ENCODE measurements at regions of chr5 and their contacts with region 1.

Region 1: DNA sequence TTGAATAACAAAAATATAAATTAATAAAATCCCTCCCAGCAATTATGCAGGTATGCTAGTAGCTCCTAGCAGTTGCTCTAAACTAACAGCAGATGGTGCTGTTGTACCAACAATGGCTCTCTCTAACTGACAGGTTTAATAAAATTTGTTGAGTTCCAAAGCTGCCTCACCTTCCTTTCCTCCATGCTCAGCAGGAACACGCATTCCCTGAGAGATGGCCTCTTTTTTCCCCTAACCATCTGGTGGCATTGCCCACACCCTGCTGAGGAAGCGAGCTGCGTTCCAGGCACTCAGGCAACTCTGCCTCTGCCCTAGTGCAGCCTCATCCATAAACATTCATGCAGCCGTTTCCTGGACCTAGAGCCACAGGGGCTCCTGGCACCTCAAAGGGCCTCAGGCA is 106.2 kb downstream of the KLHL3 start:
- DNase-seq: no peak
- H3K4me3 Mint-ChIP-seq: no peak overlapping the region
- H3K27ac Mint-ChIP-seq: no peak overlapping the region
- H3K4me1 Mint-ChIP-seq: no peaks in the 10 kb centered on the region
- H3K27me3 Mint-ChIP-seq: no peaks in the 10 kb centered on the region

Region 2: GRCh38 chr5:137619191-137619870 is 10.3 kb before region 1 on chr5:
- CTCF ChIA-PET with region 1: interaction called, 18 read pairs
- POLR2A ChIA-PET with region 1: no interaction called
- intact Hi-C with region 1: no loop called
- DNase-seq: no peak
- H3K4me3 Mint-ChIP-seq: no peak overlapping the region
- H3K27ac Mint-ChIP-seq: no peak overlapping the region
- H3K4me1 Mint-ChIP-seq: no peaks in the 10 kb centered on the region
- H3K27me3 Mint-ChIP-seq: no peaks in the 10 kb centered on the region

Region 3: DNA sequence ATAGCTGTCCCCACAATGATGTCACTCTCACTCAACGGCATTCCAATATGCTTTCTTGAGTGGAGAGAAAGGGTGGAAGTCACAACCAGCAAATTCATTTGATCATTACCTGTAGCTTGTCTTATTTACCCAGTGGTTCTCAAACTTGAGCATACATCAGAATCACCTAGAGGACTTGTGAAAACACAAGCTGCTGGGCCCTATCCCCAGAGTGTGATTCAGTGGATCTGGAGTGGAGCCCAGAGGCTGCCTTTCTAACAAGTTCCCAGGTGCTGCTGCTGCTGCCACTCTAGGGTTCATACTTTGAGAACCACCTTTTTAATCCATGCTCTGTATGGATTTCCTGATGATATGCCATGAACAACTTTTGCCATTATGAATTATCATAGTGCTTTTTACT is 11.5 kb after region 1 on chr5:
- CTCF ChIA-PET with region 1: interaction called, 21 read pairs
- POLR2A ChIA-PET with region 1: no interaction called
- intact Hi-C with region 1: no loop called
- DNase-seq: no peak
- H3K4me3 Mint-ChIP-seq: no peak overlapping the region
- H3K27ac Mint-ChIP-seq: no peak overlapping the region
- H3K4me1 Mint-ChIP-seq: no peaks in the 10 kb centered on the region
- H3K27me3 Mint-ChIP-seq: no peaks in the 10 kb centered on the region

Region 4: DNA sequence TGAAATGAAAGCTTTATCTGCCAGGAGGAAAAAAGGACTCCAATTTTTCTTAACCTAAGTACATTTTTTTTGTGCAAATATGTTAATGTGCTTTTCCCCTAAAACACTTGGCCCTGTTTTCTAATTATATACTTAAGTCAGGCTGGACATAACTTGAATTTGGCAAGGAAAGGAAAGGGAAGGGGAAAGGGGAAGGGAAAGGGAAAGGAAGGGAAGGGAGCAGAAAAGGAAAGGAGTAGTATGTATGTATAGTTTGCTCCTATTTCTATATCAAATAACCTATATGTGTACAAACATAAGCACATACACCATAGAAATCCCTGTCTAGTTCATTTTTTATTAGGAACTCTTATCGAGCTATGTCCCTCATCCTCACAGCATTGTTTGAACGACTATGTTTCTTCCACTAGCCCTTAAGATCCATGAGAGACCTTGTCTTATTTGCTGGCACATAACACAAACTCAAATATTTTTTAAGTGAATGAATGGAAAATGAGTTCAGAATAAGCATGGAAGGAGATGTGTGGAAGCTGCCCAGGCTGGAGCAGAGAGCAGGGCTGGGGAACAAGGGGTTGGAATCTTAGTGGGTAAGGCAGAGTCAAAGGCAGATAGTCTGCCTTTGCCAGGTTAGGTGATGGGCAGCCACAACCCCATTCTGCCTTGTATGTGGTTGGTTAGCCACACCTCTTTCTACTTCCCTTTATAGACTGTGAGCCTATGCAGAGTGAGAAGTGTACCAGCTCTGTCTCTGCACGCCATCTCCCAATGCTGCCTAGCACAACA is 36.2 kb after region 1 on chr5:
- CTCF ChIA-PET with region 1: interaction called, 36 read pairs
- POLR2A ChIA-PET with region 1: no interaction called
- intact Hi-C with region 1: no loop called
- DNase-seq: peak; percentile 66
- H3K4me3 Mint-ChIP-seq: no peak overlapping the region
- H3K27ac Mint-ChIP-seq: peak overlapping the region; percentile 77
- H3K4me1 Mint-ChIP-seq: peaks cover 17% of the 10 kb centered on the region
- H3K27me3 Mint-ChIP-seq: no peaks in the 10 kb centered on the region

Region 5: GRCh38 chr5:137743031-137743640 is 113.5 kb after region 1 on chr5:
- CTCF ChIA-PET with region 1: interaction called, 118 read pairs
- POLR2A ChIA-PET with region 1: interaction called, 5 read pairs
- intact Hi-C with region 1: loop called (anchors 1 kb)
- DNase-seq: peak; percentile 57
- H3K4me3 Mint-ChIP-seq: no peak overlapping the region
- H3K27ac Mint-ChIP-seq: no peak overlapping the region
- H3K4me1 Mint-ChIP-seq: peaks cover 7% of the 10 kb centered on the region
- H3K27me3 Mint-ChIP-seq: no peaks in the 10 kb centered on the region

Region 6: GRCh38 chr5:138065102-138065501 is 435.5 kb after region 1 on chr5:
- CTCF ChIA-PET with region 1: interaction called, 13 read pairs
- POLR2A ChIA-PET with region 1: no interaction called
- intact Hi-C with region 1: loop called (anchors 1 kb)
- DNase-seq: peak; percentile 15
- H3K4me3 Mint-ChIP-seq: no peak overlapping the region
- H3K27ac Mint-ChIP-seq: no peak overlapping the region
- H3K4me1 Mint-ChIP-seq: peaks cover 4% of the 10 kb centered on the region
- H3K27me3 Mint-ChIP-seq: no peaks in the 10 kb centered on the region

Region 7: GRCh38 chr5:138128334-138128733 is 498.7 kb after region 1 on chr5:
- CTCF ChIA-PET with region 1: interaction called, 6 read pairs
- POLR2A ChIA-PET with region 1: no interaction called
- intact Hi-C with region 1: loop called (anchors 5 kb)
- DNase-seq: no peak
- H3K4me3 Mint-ChIP-seq: no peak overlapping the region
- H3K27ac Mint-ChIP-seq: no peak overlapping the region
- H3K4me1 Mint-ChIP-seq: peaks cover 2% of the 10 kb centered on the region
- H3K27me3 Mint-ChIP-seq: peaks cover 3% of the 10 kb centered on the region

Measured in activated CD4-positive, alpha-beta memory T cell treated with anti-CD3 and anti-CD28 coated beads for 36 hours (primary cell).